Left colon (tissue), 2 donors: ENCODE measurements at regions of chr1 and their contacts with region 1.

Region 1: DNA sequence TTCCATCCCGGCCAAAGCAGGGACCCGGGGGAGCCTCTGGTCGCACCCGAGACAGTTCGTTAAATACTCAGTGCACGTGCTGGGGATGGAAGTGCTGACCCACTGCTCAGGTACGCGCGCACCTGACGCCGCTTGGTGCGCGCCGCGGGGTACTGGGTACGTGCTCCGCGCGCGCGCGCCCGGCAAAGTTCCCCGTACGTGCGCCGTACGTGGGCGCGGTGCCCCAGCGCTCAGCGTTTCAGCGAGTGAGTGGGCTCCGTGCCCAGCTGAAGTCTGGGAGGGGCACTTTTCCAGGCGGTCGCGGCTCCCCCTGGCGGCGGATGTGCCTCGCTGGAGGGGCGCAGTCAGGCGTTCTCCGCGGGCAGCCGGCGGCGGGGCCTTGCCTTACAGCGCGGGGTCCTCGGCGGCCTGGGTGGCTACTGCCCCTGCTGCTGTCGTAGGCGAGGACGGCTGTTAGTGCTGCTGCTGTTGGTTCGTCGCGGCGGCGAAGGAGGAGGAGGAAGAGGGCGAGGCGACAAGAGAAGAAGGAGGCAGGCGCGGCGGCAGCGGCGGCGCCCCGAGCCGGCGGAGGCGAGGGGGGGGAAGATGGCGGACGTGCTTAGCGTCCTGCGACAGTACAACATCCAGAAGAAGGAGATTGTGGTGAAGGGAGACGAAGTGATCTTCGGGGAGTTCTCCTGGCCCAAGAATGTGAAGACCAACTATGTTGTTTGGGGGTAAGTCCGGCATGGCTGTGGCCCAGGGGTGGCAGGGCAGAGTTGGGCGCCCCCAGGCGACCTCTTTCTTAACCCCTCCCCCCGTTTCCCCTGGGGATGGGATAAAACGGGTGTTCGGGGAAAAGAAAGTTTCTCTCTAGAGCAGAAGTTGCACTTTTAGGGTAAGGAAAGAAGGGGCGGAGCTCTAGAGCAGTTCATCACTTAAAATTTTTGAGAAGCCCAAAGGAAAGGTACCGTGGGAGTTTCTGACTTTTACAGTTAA is at the start of gene CDC73:
- DNase-seq: peak; percentile 97 to 99
- ATAC-seq: peak; percentile 97
- total RNA-seq, gene CDC73: 44.8 to 46.2 TPM

Region 2: GRCh38 chr1:193059268-193060225 is 62.4 kb before region 1 on chr1 and contains the starts of genes RO60 and UCHL5:
- intact Hi-C with region 1: loop called in 1 of 2 experiments (anchors 5 kb)
- DNase-seq: peak; percentile 95 to 98
- ATAC-seq: peak; percentile 92
- total RNA-seq, gene RO60: 36.4 to 47.2 TPM
- total RNA-seq, gene UCHL5: 27.5 to 28.2 TPM

Region 3: DNA sequence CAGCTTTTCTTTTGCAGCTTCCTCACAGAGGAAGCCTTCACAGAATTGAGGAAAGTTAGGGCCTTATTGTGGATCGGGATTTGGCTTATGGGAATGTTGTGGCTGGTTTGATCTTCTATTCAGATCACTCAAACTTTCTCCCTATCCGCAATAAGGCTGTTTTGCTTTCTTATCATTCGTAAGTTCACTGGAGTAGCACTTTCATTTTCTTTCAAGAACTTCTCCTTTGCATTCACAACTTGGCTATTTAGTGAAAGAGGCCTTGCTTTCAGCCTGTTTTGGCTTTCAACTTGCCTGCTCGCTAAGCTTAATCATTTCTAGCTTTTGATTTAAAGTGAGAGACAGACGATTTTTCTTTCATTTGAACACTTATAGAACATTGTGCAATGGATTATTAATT is 246.4 kb after region 1 on chr1:
- intact Hi-C with region 1: no loop called
- DNase-seq: no peak
- ATAC-seq: no peak